ENCODE measurements at regions of chr2 and their contacts with region 1.

Region 1: DNA sequence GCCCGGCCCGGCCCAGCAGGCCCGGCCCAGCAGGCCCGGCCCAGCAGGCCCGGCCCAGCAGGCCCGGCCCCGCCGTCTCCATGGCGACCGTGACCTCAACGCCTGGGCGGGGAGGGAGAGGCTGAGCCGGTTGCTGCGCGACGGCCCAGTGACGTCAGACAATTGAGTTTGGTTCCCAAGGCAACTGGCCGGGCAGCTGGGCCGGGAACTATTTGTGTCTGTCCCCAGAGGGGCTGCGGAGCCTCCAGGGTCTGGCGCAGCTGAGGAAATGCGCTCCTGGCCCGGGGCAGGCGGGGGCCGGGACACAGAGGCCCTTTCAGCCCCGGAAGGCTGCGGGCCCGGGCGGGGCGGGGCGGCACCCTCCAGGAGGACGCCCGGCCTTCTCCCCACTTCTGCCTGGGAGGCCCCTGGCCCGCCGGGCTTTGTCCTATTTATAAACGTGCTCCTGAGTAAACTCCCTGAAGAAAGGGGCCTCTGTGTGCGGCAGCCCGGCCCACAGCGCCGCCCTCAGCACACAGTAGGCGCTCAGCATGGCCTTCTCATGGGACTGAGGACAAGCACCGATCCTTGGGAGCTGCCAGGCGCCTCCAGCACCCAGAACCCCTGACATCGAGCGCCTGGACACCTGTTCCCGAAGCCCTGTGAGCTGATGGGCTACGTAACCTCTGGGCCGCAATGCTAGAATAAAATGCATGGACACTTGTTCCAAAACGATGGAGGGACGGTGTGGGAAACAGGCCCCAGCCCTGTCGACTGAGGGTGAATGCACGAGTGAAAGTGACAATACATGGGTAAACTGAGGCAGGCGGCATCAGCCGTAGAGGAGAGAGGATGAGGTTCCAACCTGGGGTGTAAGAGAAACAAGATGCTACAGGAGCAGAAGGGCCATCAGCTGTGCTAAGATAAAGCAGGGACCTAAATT is 12.3 kb downstream of the TEX44 start:
- DNase-seq: peak in 1 of 2 donors; percentile 99
- H3K4me3 ChIP-seq: peak overlapping the region; percentile 59 to 61
- H3K27ac ChIP-seq: peak overlapping the region; percentile 95
- H3K4me1 ChIP-seq: peaks cover 40% of the 10 kb centered on the region
- H3K27me3 ChIP-seq: no peaks in the 10 kb centered on the region
- CTCF ChIP-seq: peak in 1 of 3 experiments; percentile 33
- POLR2A ChIP-seq: no peak

Region 2: DNA sequence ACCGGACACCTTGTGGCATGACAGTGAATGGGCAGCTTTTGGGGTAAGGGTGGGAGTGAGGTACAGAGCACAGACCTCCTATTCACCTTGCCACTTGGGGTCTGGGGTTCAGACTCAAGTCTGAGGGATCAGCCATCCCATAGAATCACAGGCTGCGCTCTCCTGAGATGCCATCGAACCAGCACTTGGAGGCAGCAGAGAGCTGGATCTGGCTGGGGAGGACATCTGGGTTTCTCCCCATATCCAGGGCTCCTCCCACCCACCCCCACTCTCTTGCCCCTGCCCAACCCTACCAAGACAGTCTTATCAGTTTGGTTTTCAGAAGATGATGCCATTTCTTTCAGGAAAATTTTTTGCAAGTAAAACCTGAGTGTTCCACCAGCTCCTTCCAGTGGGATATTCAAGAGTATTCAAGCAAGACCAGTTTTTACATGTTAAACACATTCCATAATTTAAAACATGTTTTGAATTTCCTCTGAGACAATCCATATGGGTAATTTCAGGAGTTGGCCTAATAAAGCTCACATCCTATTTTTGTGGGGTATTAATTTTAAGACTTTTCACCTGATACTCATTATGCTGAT is 41.5 kb before region 1 on chr2:
- intact Hi-C with region 1: loop called (anchors 5 kb)
- DNase-seq: no peak
- H3K4me3 ChIP-seq: no peak overlapping the region
- H3K27ac ChIP-seq: no peak overlapping the region
- H3K4me1 ChIP-seq: no peaks in the 10 kb centered on the region
- H3K27me3 ChIP-seq: no peaks in the 10 kb centered on the region
- CTCF ChIP-seq: peak in 2 of 3 experiments; percentile 43 to 59
- POLR2A ChIP-seq: no peak

Measured in vagina (tissue), 2 donors.